ENCODE measurements at regions of chr3 and their contacts with region 1.

Region 1: DNA sequence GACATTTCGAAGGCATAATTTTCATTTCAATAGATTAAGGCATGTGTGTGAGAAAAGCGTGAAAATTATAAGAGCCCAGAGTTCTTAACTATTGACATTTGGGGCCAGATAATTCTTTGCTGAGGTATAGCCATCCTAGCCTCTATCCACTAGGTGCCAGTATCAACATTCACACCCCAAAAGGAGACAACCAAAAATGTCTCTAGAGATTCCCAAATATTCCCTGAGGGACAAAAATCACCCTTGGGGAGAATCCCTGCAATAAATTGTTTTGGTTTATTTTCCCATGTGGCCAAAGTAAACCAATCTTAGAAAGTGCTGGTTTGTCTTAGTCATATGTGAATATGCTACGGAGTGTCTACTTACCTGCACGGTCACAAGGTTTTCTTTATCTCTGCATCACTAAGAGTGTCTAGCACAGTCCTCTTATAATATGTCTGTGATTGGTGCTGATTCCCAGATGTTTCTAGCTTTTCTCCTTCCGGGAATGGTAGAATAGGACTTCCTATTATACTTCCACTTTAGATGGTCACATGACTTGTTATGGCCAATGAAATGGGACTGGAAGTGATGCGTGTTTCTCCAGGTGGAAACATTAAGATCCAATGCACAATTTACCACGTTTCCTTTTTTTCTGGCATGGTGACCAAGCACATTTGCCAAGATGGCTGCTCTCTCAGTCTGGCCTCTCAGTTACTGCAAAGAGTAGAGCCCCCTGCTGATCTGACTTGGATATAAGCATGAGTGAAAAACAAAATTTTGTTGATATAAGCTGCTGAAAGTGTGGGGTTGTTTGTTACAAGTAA is 8.0 kb upstream of the KBTBD8 start:
- DNase-seq: no peak
- ATAC-seq: no peak
- H3K4me3 Mint-ChIP-seq: no peak overlapping the region
- H3K27ac Mint-ChIP-seq: no peak overlapping the region
- H3K4me1 Mint-ChIP-seq: no peaks in the 10 kb centered on the region
- H3K27me3 Mint-ChIP-seq: peaks cover 14% of the 10 kb centered on the region

Region 2: GRCh38 chr3:66938338-66938963 is 51.6 kb before region 1 on chr3:
- CTCF ChIA-PET with region 1: interaction called, 10 read pairs
- POLR2A ChIA-PET with region 1: no interaction called
- DNase-seq: peak; percentile 46
- ATAC-seq: peak; percentile 61
- H3K4me3 Mint-ChIP-seq: no peak overlapping the region
- H3K27ac Mint-ChIP-seq: no peak overlapping the region
- H3K4me1 Mint-ChIP-seq: no peaks in the 10 kb centered on the region
- H3K27me3 Mint-ChIP-seq: peaks cover 17% of the 10 kb centered on the region

Region 3: GRCh38 chr3:67290438-67290837 is 300.4 kb after region 1 on chr3:
- CTCF ChIA-PET with region 1: no interaction called
- POLR2A ChIA-PET with region 1: no interaction called
- DNase-seq: no peak
- ATAC-seq: no peak
- H3K4me3 Mint-ChIP-seq: no peak overlapping the region
- H3K27ac Mint-ChIP-seq: no peak overlapping the region
- H3K4me1 Mint-ChIP-seq: no peaks in the 10 kb centered on the region
- H3K27me3 Mint-ChIP-seq: no peaks in the 10 kb centered on the region